A549 (cell line): ENCODE measurements at regions of chr10 and their contacts with region 1.

Region 1: DNA sequence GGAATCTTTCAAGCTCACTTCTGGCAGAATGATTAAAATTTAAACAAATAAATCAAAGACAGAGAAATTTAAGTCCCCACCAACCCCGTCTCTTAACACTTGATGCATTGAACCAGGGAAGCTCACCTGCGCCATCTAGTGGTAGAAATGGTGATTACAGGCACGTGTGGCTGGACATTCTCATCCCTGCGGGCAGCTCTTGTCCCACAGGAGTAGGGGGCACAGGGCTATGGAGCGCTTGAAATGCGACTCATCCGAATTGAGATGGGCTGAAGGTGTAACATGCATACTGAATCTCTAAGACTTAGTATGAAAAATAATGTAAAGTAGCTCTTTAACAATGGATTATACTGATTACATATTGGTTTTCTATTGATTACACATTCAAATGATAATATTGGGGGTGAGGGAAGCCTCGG is 24.8 kb upstream of the SLIT1 start:
- DNase-seq: peak; percentile 60 to 73
- ATAC-seq: peak; percentile 69 to 89; a peak in 4 of 6 replicates
- H3K4me3 ChIP-seq: no peak overlapping the region
- H3K27ac ChIP-seq: no peak overlapping the region
- H3K4me1 ChIP-seq: no peaks in the 10 kb centered on the region
- CTCF ChIP-seq: peak; percentile 98
- EP300 ChIP-seq: no peak
- POLR2A ChIP-seq: no peak
- RAD21 ChIP-seq: peak; percentile 81 to 85

Region 2: DNA sequence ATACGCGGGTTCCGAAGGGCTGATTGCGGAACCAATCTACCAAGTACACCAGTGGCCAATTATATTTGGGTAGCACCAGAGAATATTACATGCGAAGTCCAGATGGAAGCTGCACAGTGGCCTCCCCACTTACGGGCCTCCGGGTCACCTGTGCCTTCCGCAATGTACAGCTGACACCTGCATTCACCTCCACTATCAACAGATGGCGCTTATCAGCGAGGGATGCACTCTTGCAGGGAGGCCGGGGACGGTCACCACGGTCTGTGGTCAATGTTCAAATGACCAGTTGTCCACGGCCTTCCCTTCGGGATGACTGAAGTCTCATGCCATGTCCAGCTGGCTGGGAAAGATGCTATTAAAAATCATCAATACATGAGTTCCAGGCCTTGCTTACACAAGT is 72.4 kb before region 1 on chr10:
- CTCF ChIA-PET with region 1: interaction called, 34 read pairs
- POLR2A ChIA-PET with region 1: no interaction called
- DNase-seq: peak; percentile 35 to 58
- ATAC-seq: peak; percentile 78 to 91; a peak in 5 of 6 replicates
- H3K4me3 ChIP-seq: no peak overlapping the region
- H3K27ac ChIP-seq: no peak overlapping the region
- H3K4me1 ChIP-seq: no peaks in the 10 kb centered on the region
- CTCF ChIP-seq: peak; percentile 46
- EP300 ChIP-seq: no peak
- POLR2A ChIP-seq: no peak
- RAD21 ChIP-seq: peak; percentile 31 to 36; a peak in 3 of 5 replicates

Region 3: DNA sequence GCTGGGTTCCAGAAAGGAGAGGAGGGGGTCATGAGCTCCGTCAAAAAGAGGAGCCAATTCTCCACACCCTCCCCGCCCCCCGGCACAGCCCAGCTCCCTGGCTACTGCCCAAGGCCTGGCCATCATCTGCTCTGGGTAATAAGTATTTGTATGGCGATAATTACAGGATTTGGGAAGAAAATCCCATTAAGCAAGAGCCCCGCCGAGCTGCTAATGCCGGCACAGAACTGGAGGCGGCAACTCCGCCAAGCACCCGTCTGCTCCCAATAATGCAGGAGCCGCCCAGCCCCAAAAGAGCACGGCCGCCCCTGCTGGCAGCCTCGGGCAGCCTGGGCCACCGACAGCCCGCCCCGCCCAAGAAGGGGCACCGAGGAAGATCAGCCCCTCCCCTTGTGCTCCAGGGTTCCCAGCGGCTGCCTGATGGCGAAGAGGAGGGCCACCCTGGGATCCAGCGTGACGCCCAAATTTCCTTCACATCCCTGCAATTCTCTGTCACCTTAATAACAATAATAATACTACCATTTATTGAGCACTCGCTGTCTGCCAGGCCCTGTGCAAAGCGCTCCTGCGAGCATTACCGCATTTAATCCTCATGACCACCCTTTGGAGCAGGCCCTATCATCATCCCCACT is 30.7 kb before region 1 on chr10:
- CTCF ChIA-PET with region 1: interaction called, 27 read pairs
- POLR2A ChIA-PET with region 1: no interaction called
- DNase-seq: no peak
- ATAC-seq: peak in 1 of 2 experiments; percentile 65; a peak in 3 of 6 replicates
- H3K4me3 ChIP-seq: no peak overlapping the region
- H3K27ac ChIP-seq: no peak overlapping the region
- H3K4me1 ChIP-seq: no peaks in the 10 kb centered on the region
- CTCF ChIP-seq: no peak
- EP300 ChIP-seq: no peak
- POLR2A ChIP-seq: no peak
- RAD21 ChIP-seq: no peak

Region 4: GRCh38 chr10:97222326-97222961 is 11.9 kb after region 1 on chr10:
- CTCF ChIA-PET with region 1: interaction called, 136 read pairs
- POLR2A ChIA-PET with region 1: no interaction called
- DNase-seq: no peak
- ATAC-seq: no peak
- H3K4me3 ChIP-seq: no peak overlapping the region
- H3K27ac ChIP-seq: no peak overlapping the region
- H3K4me1 ChIP-seq: no peaks in the 10 kb centered on the region
- CTCF ChIP-seq: no peak
- EP300 ChIP-seq: no peak
- POLR2A ChIP-seq: no peak
- RAD21 ChIP-seq: no peak